IMR-90 (cell line): ENCODE measurements at regions of chr12 and their contacts with region 1.

Region 1: DNA sequence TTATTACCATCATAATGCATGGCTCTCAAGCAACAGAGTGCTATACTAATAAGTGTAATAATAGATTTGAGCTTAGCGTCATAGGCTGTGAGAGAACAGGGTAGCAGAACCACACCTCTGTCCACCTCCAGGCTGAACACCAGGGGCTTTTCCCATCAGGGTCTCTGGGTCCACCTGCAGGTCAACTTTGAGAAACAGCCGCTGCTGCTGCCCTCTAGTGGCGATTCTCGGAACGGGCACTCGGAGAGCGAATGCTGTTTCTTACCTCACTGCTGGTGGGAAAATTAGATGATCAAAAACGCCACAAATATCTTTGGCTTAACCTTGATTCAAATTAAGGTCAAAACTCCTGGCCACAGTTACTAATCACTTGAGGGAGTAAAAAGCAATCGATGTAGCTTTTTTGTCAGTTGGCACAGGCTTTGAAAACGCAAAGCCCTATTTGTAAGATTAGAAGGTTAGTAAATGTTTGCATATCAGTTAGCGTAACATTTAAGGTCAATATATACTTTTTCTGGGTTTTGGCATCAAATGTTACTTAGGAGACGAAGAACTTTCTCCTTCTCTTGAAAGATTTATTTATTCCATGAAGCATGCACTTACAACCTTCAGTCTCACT is 127.9 kb upstream of the TMEM132D start:
- DNase-seq: no peak
- ATAC-seq: no peak
- H3K4me3 ChIP-seq: no peak overlapping the region
- H3K27ac ChIP-seq: no peak overlapping the region
- H3K4me1 ChIP-seq: no peaks in the 10 kb centered on the region
- H3K27me3 ChIP-seq: no peaks in the 10 kb centered on the region
- CTCF ChIP-seq: peak; percentile 39
- POLR2A ChIP-seq: no peak
- RAD21 ChIP-seq: no peak

Region 2: GRCh38 chr12:130281153-130281799 is 249.6 kb after region 1 on chr12:
- CTCF ChIA-PET with region 1: no interaction called
- POLR2A ChIA-PET with region 1: no interaction called
- dilution Hi-C with region 1: no loop called
- in situ Hi-C with region 1: no loop called
- intact Hi-C with region 1: no loop called
- DNase-seq: no peak
- ATAC-seq: no peak
- H3K4me3 ChIP-seq: no peak overlapping the region
- H3K27ac ChIP-seq: no peak overlapping the region
- H3K4me1 ChIP-seq: no peaks in the 10 kb centered on the region
- H3K27me3 ChIP-seq: no peaks in the 10 kb centered on the region
- CTCF ChIP-seq: no peak; the same call in 1 of the 2 replicates
- POLR2A ChIP-seq: no peak
- RAD21 ChIP-seq: no peak

Region 3: GRCh38 chr12:130413909-130414308 is 382.2 kb after region 1 on chr12:
- CTCF ChIA-PET with region 1: no interaction called
- POLR2A ChIA-PET with region 1: no interaction called
- dilution Hi-C with region 1: no loop called
- in situ Hi-C with region 1: no loop called
- intact Hi-C with region 1: no loop called
- DNase-seq: no peak
- ATAC-seq: no peak
- H3K4me3 ChIP-seq: no peak overlapping the region
- H3K27ac ChIP-seq: no peak overlapping the region
- H3K4me1 ChIP-seq: no peaks in the 10 kb centered on the region
- H3K27me3 ChIP-seq: no peaks in the 10 kb centered on the region
- CTCF ChIP-seq: no peak
- POLR2A ChIP-seq: no peak
- RAD21 ChIP-seq: no peak

Region 4: DNA sequence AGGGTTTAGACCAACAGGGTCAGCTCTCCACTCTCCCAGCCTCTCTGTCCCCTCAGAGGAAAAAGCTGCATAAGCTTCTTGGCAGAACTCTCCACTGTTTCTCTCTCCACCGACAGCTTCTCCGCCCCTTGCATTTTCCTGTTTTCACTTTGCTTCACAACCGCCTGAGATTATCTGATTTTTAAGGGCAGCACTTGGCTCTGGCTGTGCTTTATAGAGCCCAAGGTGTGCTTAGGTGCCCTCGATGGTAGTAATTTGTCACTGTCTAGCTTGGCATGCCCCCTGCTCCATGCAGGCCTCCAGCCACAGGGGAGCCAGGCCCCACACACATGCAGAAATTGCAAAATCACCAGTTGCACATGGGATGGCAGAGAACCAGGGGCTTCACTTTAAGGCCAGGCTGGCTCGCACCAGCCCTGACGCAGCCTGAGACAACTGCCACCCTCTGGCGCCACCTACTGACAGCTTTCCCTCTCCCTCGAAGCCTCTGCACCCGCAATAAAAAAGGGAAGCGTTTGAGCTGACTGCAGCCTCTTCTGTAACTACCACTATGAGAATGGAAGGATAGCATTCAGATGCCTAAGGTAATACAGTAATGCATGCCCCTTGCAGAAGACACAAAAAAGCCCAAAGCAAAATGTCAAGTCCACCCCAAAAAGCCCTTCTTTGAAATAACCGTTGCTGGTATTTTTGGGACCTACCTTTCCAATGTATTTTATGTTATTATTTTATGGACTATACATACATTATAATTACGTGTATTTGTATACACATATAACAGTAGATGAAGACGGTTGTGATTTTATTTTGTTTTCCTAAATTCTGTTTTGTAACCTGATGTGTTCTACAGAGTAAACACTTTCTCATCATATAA is 716.4 kb after region 1 on chr12:
- CTCF ChIA-PET with region 1: no interaction called
- POLR2A ChIA-PET with region 1: no interaction called
- dilution Hi-C with region 1: no loop called
- in situ Hi-C with region 1: loop called (anchors 25 kb)
- intact Hi-C with region 1: no loop called
- DNase-seq: peak; percentile 43
- ATAC-seq: peak; percentile 99
- H3K4me3 ChIP-seq: no peak overlapping the region
- H3K27ac ChIP-seq: no peak overlapping the region
- H3K4me1 ChIP-seq: no peaks in the 10 kb centered on the region
- H3K27me3 ChIP-seq: no peaks in the 10 kb centered on the region
- CTCF ChIP-seq: peak; percentile 73
- POLR2A ChIP-seq: no peak
- RAD21 ChIP-seq: peak; percentile 68